ENCODE measurements at regions of chr19 and their contacts with region 1.

Region 1: GRCh38 chr19:1767464-1767933 is 14.2 kb downstream of the ONECUT3 start:
- DNase-seq: peak; percentile 68
- H3K4me3 Mint-ChIP-seq: no peak overlapping the region
- H3K27ac Mint-ChIP-seq: no peak overlapping the region
- H3K4me1 Mint-ChIP-seq: no peaks in the 10 kb centered on the region
- H3K27me3 Mint-ChIP-seq: peaks cover 66% of the 10 kb centered on the region

Region 2: DNA sequence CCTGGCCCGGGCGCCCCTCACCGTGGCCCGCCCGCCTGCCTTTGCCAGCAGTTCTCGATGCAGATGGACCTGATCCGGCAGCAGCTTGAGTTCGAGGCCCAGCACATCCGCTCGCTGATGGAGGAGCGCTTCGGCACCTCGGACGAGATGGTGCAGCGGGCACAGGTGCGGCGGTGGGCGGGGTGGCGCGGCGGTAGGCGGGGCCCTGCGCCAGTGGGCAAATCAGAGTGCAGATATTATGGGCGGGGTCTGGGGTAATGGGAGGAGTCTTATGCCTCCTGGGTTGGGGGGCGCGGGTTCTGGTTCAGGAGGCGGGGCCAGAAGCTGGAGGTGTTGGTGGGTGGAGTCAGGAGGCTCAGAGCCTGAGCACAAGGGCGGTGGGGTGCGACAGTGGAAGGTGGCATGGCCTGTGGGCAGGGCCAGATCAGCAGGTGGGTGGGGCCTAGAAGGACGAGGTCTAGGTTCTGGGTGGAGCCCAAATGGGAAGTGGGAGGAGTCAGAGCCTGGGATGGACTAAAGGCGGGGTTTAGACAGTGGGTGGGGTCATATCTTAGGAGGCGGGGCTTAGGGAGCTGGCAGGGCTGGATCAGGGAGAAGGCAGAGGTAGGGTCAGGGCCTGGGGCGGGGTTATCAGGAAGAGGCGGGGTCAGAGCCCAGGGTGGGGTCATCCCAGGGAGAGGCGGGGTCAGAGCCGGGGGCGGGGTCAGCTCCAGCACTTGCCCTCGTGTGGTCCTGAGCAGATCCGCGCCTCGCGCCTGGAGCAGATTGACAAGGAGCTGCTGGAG is 312.0 kb before region 1 on chr19:
- CTCF ChIA-PET with region 1: no interaction called
- POLR2A ChIA-PET with region 1: no interaction called
- intact Hi-C with region 1: loop called (anchors 10 kb)
- DNase-seq: peak; percentile 79
- H3K4me3 Mint-ChIP-seq: no peak overlapping the region
- H3K27ac Mint-ChIP-seq: peak overlapping the region; percentile 8
- H3K4me1 Mint-ChIP-seq: peaks cover 25% of the 10 kb centered on the region
- H3K27me3 Mint-ChIP-seq: peaks cover 54% of the 10 kb centered on the region

Region 3: DNA sequence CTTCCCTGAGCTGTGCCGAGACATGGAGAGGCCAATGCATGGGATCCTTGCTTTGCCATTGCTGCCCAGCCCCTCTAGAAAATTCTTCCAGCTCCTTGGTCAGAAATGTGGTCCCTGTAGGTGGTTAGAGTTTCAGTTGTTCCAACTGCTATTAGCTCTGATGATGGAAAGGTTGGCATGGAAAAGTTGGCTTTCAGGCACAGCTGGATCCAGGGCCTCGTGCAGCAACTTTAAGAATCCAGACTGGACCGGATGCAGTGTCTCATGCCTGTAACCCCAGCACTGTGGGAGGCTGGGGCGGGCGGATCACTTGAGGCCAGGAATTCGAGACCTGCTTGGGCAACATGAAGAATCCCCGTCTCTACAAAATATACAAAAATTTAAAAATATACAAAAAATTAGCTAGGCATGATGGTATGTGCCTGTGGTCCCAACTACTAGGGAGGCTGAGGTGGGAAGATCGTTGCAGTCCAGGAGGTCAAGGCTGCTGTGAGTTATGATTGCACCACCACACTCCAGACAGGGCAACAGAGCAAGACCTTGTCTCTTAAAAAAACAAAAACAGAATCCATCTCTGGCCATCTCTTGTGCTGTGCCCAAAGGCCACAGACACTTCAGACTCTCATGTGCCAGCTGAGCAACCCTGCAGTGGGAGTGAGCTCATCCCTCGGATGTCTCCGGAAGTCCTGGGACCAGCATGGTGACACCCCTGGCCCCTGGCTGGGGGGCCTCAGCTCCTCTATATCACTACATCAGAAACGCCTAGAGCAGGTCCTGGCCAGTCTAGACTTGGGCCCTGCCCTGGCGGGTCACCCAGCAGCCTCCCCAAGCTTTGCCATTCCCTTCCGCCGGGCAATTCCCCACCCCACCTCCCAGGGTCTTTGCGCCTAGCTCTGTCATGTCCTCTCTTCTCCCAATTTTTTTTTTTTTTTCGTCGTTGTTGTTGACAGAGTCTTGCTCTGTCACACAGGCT is 216.1 kb before region 1 on chr19:
- CTCF ChIA-PET with region 1: interaction called, 7 read pairs
- POLR2A ChIA-PET with region 1: no interaction called
- intact Hi-C with region 1: loop called (anchors 5 kb)
- DNase-seq: no peak
- H3K4me3 Mint-ChIP-seq: no peak overlapping the region
- H3K27ac Mint-ChIP-seq: no peak overlapping the region
- H3K4me1 Mint-ChIP-seq: peaks cover under 1% of the 10 kb centered on the region
- H3K27me3 Mint-ChIP-seq: peaks cover 14% of the 10 kb centered on the region

Region 4: GRCh38 chr19:1672038-1672768 is 95.3 kb before region 1 on chr19:
- CTCF ChIA-PET with region 1: interaction called, 42 read pairs
- POLR2A ChIA-PET with region 1: no interaction called
- intact Hi-C with region 1: loop called (anchors 1 kb)
- DNase-seq: peak; percentile 58
- H3K4me3 Mint-ChIP-seq: no peak overlapping the region
- H3K27ac Mint-ChIP-seq: no peak overlapping the region
- H3K4me1 Mint-ChIP-seq: peaks cover 16% of the 10 kb centered on the region
- H3K27me3 Mint-ChIP-seq: peaks cover 46% of the 10 kb centered on the region

Region 5: DNA sequence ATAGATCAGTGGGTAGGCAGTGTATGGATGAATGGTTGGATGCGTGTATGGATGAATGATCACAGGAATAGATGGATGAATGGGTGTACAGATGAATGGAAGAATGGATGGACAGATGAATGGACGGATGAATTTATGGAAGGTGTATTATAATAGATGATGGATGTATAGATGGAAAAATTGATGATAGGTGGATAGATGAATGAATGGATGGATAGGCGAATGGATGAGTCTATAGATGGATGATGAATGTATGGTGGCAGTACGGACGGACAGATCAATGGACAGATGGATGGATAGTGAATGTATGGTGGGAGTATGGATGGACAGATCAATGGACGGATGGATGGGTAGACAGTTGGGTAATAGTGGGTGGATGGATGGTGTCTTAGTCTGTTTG is 63.2 kb before region 1 on chr19:
- CTCF ChIA-PET with region 1: no interaction called
- POLR2A ChIA-PET with region 1: no interaction called
- intact Hi-C with region 1: no loop called
- DNase-seq: no peak
- H3K4me3 Mint-ChIP-seq: no peak overlapping the region
- H3K27ac Mint-ChIP-seq: no peak overlapping the region
- H3K4me1 Mint-ChIP-seq: peaks cover 8% of the 10 kb centered on the region
- H3K27me3 Mint-ChIP-seq: peaks cover 32% of the 10 kb centered on the region

Region 6: DNA sequence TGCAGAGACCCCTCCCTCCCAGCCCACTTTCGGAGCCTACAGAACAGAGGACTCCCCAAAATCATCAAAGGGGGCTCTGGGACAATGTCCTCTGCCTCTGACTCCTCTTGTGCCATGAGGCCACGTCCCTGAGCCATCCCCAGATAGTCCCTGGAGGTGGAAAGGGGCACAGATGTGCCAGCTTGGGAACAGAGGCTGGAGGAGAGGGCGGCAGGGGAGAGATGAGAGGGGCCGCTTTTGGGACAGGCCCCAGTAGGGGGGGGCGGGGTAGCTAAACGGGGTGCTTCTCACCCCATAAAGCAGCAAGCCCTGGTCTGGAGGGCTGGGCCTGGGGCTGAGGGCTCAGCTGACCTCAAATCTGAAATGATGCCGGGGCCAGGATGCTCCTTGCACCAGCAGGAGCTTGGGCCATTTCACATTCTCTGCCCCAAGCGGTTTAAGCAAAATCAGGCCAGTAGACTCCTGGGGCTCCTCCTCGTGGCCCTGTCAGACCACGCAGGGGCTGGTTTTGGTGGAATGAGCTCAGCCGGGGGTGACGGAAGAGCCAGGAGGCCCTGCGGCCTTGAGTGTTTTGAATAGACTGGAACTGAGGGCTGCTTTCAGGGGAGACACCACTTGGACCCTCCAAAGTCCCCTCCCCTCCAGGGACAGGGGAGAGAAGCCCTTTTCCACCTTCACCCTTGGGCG is 12.9 kb after region 1 on chr19:
- CTCF ChIA-PET with region 1: interaction called, 21 read pairs
- POLR2A ChIA-PET with region 1: no interaction called
- intact Hi-C with region 1: no loop called
- DNase-seq: no peak
- H3K4me3 Mint-ChIP-seq: no peak overlapping the region
- H3K27ac Mint-ChIP-seq: no peak overlapping the region
- H3K4me1 Mint-ChIP-seq: no peaks in the 10 kb centered on the region
- H3K27me3 Mint-ChIP-seq: peaks cover 55% of the 10 kb centered on the region

Region 7: GRCh38 chr19:1794424-1795172 is 27.1 kb after region 1 on chr19:
- CTCF ChIA-PET with region 1: interaction called, 10 read pairs
- POLR2A ChIA-PET with region 1: no interaction called
- intact Hi-C with region 1: no loop called
- DNase-seq: peak; percentile 22
- H3K4me3 Mint-ChIP-seq: no peak overlapping the region
- H3K27ac Mint-ChIP-seq: no peak overlapping the region
- H3K4me1 Mint-ChIP-seq: peaks cover 3% of the 10 kb centered on the region
- H3K27me3 Mint-ChIP-seq: peaks cover 15% of the 10 kb centered on the region

Measured in activated CD4-positive, alpha-beta memory T cell treated with anti-CD3 and anti-CD28 coated beads for 36 hours (primary cell).